ENCODE measurements at regions of chr3 and their contacts with region 1.

Region 1: DNA sequence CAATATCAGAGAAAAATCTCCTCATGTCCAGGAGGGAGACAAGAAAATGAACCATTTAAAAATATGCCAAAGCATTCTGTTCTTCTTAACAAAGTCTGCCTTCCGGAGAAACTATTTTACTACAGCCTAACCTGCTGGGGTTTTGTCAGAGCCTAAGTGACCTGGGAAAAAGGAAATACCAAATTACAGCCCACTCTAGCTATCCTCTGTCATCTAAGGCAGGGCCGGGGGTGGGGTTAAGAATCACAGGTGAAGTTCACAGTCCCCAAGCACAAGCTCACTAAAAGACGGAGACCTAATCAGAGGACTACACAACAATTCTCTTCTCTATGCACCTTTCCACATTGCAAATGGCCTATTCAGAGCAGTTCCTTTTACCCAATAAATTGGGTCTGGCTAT is 116.6 kb downstream of the TRIM42 start:
- DNase-seq: no peak
- ATAC-seq: no peak

Region 2: GRCh38 chr3:142459929-142460328 is 1665.4 kb after region 1 on chr3:
- intact Hi-C with region 1: loop called (anchors 10 kb)
- DNase-seq: no peak
- ATAC-seq: no peak

Measured in sciatic nerve (tissue), 2 donors.